OCI-LY7 (cell line): ENCODE measurements at regions of chr4 and their contacts with region 1.

Region 1: GRCh38 chr4:170990989-170991589 is 822.1 kb upstream of the GALNTL6 start:
- DNase-seq: peak; percentile 37
- H3K4me3 ChIP-seq: no peak overlapping the region
- H3K27ac ChIP-seq: no peak overlapping the region
- H3K4me1 ChIP-seq: no peaks in the 10 kb centered on the region
- CTCF ChIP-seq: peak; percentile 73

Region 2: DNA sequence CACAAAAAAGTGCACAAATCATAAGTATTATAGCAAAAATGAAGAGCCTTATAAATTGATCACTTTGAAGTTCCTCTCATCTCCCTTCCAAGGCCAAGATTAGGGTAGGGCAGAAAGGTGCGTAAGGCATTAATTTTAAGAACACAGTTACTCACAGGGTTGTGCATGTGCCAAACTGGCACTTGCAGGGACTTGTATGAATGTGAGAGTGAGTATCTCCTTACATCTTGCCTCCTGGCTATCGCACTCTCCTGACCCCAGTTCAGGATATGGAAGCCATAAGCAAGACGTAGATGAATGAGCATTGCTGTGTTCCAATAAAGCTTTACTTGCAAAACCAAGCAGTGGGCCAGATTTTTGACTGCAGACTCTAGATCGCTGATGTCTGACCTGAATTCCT is 391.2 kb before region 1 on chr4:
- CTCF ChIA-PET with region 1: no interaction called
- POLR2A ChIA-PET with region 1: no interaction called
- intact Hi-C with region 1: no loop called
- DNase-seq: no peak
- H3K4me3 ChIP-seq: no peak overlapping the region
- H3K27ac ChIP-seq: no peak overlapping the region
- H3K4me1 ChIP-seq: no peaks in the 10 kb centered on the region
- CTCF ChIP-seq: no peak

Region 3: GRCh38 chr4:171157462-171158082 is 166.5 kb after region 1 on chr4:
- CTCF ChIA-PET with region 1: no interaction called
- POLR2A ChIA-PET with region 1: no interaction called
- intact Hi-C with region 1: loop called (anchors 10 kb)
- DNase-seq: no peak
- H3K4me3 ChIP-seq: no peak overlapping the region
- H3K27ac ChIP-seq: no peak overlapping the region
- H3K4me1 ChIP-seq: no peaks in the 10 kb centered on the region
- CTCF ChIP-seq: no peak

Region 4: DNA sequence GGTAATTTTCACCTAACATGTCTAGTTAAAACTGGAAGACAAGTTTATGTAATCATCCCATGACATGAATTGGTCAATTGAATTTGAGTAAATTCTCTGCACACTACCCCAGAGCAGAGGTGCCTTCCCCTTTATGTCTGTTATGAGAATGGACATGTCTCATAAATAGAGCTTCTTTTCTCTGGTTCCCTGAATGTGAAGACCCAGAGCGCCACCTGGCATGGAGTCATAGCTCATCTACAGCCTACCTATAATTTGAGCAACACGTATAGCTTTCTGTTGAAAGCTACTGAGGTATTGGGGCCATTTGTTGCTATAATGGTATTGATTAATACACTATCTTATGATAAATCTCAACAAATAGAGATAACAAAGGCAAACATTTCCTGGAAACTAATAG is 195.6 kb after region 1 on chr4:
- CTCF ChIA-PET with region 1: no interaction called
- POLR2A ChIA-PET with region 1: no interaction called
- intact Hi-C with region 1: loop called (anchors 2 kb)
- DNase-seq: no peak
- H3K4me3 ChIP-seq: no peak overlapping the region
- H3K27ac ChIP-seq: no peak overlapping the region
- H3K4me1 ChIP-seq: no peaks in the 10 kb centered on the region
- CTCF ChIP-seq: 0 out of 2 replicates have a peak, but pooled peaks have one; percentile 36